BJ (cell line): ENCODE measurements at regions of chr4 and their contacts with region 1.

Region 1: GRCh38 chr4:67746797-67747495 is 7.2 kb downstream of the GNRHR start:
- DNase-seq: no peak
- H3K4me3 ChIP-seq: no peak overlapping the region
- H3K27me3 ChIP-seq: no peaks in the 10 kb centered on the region
- CTCF ChIP-seq: peak; percentile 58

Region 2: GRCh38 chr4:67700738-67701516 is 46.0 kb before region 1 on chr4 and contains the start of gene UBA6:
- CTCF ChIA-PET with region 1: interaction called, 11 read pairs
- POLR2A ChIA-PET with region 1: no interaction called
- DNase-seq: peak; percentile 80
- H3K4me3 ChIP-seq: peak within 1 kb of the TSS; percentile 60
- H3K27me3 ChIP-seq: no peaks in the 10 kb centered on the region
- CTCF ChIP-seq: peak; percentile 43; the same call in 1 of the 2 replicates
- polyA plus RNA-seq, gene UBA6: 34.9 and 67.9 TPM in 2 replicates

Region 3: DNA sequence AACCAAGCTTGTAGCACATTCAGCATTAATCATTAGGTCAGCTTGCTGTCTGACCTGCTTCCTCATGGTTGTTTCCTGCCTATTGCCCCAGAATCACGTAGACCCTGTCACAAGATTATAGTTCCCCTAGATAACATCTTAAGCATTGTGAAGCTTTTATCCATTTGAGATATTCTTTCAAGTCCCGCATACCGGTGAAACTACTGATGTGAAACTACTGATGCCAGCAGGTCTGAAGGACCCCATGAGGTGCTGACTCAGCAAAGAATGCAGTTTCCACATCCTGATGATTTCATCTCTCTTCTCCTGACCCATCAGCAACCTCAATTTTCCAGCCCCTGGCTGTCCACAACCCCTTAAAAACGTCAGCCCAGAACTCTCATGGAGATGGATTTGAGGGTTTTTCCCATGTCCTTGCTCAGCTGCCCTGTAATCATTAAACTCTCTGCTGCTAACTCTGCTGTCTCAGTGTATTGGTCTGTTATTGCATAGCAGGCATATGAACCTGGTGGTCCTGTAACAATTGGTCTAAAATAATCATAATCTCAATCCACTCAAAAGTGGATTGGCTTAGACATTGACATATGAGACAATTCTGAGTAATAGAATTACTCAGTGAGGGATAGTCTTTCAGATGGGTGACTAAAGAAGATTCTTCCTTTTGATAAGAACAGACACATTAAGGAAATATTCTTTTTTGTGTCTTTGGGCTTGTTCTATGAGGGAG is 19.7 kb before region 1 on chr4:
- CTCF ChIA-PET with region 1: interaction called, 41 read pairs
- POLR2A ChIA-PET with region 1: no interaction called
- DNase-seq: no peak
- H3K4me3 ChIP-seq: no peak overlapping the region
- H3K27me3 ChIP-seq: no peaks in the 10 kb centered on the region
- CTCF ChIP-seq: no peak

Region 4: DNA sequence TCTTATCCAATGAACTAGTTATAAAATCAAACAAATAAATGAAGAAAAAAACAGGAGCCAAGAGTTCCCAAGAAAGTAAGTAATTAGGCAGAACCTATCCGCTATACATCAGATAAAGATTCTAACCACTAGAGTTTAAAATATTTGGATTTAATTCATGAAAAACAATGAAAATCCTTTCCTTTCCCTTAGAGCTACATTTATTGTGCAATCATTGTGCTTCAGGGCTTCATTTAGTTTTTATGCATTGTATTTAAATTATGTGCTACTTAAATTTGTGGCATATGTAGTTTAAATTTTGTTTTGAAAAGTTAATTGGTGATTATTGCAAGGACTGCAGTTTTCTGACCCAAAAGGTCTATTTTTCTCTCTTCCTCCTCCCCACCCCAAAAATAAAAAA is 10.7 kb before region 1 on chr4:
- CTCF ChIA-PET with region 1: interaction called, 41 read pairs
- POLR2A ChIA-PET with region 1: no interaction called
- DNase-seq: no peak
- H3K4me3 ChIP-seq: no peak overlapping the region
- H3K27me3 ChIP-seq: no peaks in the 10 kb centered on the region
- CTCF ChIP-seq: no peak

Region 5: GRCh38 chr4:67762086-67762485 is 15.1 kb after region 1 on chr4:
- CTCF ChIA-PET with region 1: interaction called, 17 read pairs
- POLR2A ChIA-PET with region 1: no interaction called
- DNase-seq: no peak
- H3K4me3 ChIP-seq: no peak overlapping the region
- H3K27me3 ChIP-seq: no peaks in the 10 kb centered on the region
- CTCF ChIP-seq: no peak